Activated CD4-positive, alpha-beta memory T cell treated with anti-CD3 and anti-CD28 coated beads, Interleukin-2, amount 10 ng/mL, durations not matched to agents 7 days and 5 days (primary cell): ENCODE measurements at regions of chr6 and their contacts with region 1.

Region 1: GRCh38 chr6:151690768-151691562 is 116.5 kb upstream of the ESR1 start:
- DNase-seq: peak; percentile 46
- H3K4me3 Mint-ChIP-seq: peak overlapping the region; percentile 73
- H3K27ac Mint-ChIP-seq: peak overlapping the region; percentile 67
- H3K4me1 Mint-ChIP-seq: peaks cover 27% of the 10 kb centered on the region
- H3K27me3 Mint-ChIP-seq: peaks cover 4% of the 10 kb centered on the region

Region 2: GRCh38 chr6:151617522-151617921 is 73.4 kb before region 1 on chr6:
- CTCF ChIA-PET with region 1: no interaction called
- POLR2A ChIA-PET with region 1: no interaction called
- DNase-seq: no peak
- H3K4me3 Mint-ChIP-seq: no peak overlapping the region
- H3K27ac Mint-ChIP-seq: no peak overlapping the region
- H3K4me1 Mint-ChIP-seq: no peaks in the 10 kb centered on the region
- H3K27me3 Mint-ChIP-seq: peaks cover 11% of the 10 kb centered on the region

Region 3: DNA sequence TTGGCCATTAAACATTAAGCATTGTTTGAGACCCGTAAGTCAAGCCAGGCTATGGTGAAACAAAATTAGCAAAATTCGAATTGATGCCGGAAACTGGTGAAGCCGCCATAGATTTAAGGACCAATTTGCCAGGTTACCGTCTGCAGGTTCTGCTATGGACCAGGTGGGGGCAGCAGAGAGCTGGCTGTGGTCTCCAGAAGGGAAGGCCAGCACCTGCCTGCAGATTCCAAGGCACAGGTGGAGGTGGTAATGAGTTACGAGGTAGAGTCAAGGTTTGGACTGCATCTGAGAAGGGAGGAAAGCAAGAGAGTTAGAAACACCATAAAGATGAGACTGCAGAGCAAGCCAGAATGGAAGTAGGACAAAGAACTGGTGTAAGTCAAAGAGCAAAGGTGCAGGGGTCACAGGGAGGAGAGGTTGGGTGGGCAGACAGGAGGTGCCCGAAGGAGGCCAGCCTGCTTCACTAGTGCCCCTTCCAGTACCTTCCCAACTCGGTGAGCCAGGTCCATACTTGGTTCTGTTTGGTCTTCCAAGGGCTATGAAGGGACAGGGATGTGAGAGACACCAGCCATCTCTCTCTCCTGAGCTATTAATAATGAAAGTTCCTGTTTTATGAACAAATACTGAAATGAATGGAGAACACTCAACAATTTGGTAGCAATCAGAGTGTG is 15.1 kb before region 1 on chr6:
- CTCF ChIA-PET with region 1: interaction called, 11 read pairs
- POLR2A ChIA-PET with region 1: interaction called, 4 read pairs
- DNase-seq: peak; percentile 63
- H3K4me3 Mint-ChIP-seq: no peak overlapping the region
- H3K27ac Mint-ChIP-seq: no peak overlapping the region
- H3K4me1 Mint-ChIP-seq: peaks cover 12% of the 10 kb centered on the region
- H3K27me3 Mint-ChIP-seq: no peaks in the 10 kb centered on the region

Region 4: GRCh38 chr6:151765444-151765886 is 74.5 kb after region 1 on chr6:
- CTCF ChIA-PET with region 1: interaction called, 10 read pairs
- POLR2A ChIA-PET with region 1: interaction called, 4 read pairs
- DNase-seq: peak; percentile 34
- H3K4me3 Mint-ChIP-seq: no peak overlapping the region
- H3K27ac Mint-ChIP-seq: no peak overlapping the region
- H3K4me1 Mint-ChIP-seq: peaks cover 30% of the 10 kb centered on the region
- H3K27me3 Mint-ChIP-seq: peaks cover 7% of the 10 kb centered on the region

Region 5: DNA sequence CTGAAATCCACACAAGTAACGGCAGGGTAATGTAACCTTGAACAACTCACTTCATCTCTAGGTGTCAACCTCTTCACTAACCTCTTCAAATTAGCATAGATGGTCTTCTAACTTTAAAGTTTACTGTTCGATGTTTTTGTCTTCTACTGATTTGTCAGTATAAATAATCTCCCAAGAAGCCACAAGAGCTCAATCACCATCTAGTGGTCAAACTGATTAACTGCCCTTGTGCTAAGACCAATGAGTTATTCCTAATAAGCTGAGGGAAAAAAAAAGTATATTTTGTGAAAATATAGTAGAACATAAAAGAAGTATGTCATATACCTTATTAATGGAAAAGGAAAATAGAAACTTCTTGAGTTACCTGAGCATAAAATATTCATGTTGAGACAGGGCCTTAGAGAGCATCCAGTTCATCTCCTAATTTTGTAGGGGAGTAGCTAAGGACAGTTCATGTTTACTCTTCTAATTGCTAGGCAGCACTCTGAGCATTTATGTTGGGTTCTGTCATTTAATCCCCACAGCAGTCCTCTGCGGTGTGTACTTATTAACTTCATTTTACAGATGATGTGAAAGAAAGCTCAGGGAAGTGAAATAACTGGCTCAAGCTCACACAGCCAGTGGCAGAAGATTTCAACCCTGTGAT is 433.6 kb after region 1 on chr6:
- CTCF ChIA-PET with region 1: interaction called, 14 read pairs
- POLR2A ChIA-PET with region 1: interaction called, 3 read pairs
- DNase-seq: no peak
- H3K4me3 Mint-ChIP-seq: no peak overlapping the region
- H3K27ac Mint-ChIP-seq: no peak overlapping the region
- H3K4me1 Mint-ChIP-seq: no peaks in the 10 kb centered on the region
- H3K27me3 Mint-ChIP-seq: no peaks in the 10 kb centered on the region

Region 6: GRCh38 chr6:152301764-152302568 is 611.0 kb after region 1 on chr6:
- CTCF ChIA-PET with region 1: interaction called, 3 read pairs
- POLR2A ChIA-PET with region 1: interaction called, 11 read pairs
- DNase-seq: peak; percentile 92
- H3K4me3 Mint-ChIP-seq: peak overlapping the region; percentile 95
- H3K27ac Mint-ChIP-seq: peak overlapping the region; percentile 97
- H3K4me1 Mint-ChIP-seq: peaks cover 30% of the 10 kb centered on the region
- H3K27me3 Mint-ChIP-seq: no peaks in the 10 kb centered on the region